GM13976 (cell line): ENCODE measurements at regions of chr18 and their contacts with region 1.

Region 1: GRCh38 chr18:13216092-13216582 is 2.4 kb upstream of the LDLRAD4 start:
- DNase-seq: peak; percentile 70
- CTCF ChIP-seq: peak; percentile 67

Region 2: DNA sequence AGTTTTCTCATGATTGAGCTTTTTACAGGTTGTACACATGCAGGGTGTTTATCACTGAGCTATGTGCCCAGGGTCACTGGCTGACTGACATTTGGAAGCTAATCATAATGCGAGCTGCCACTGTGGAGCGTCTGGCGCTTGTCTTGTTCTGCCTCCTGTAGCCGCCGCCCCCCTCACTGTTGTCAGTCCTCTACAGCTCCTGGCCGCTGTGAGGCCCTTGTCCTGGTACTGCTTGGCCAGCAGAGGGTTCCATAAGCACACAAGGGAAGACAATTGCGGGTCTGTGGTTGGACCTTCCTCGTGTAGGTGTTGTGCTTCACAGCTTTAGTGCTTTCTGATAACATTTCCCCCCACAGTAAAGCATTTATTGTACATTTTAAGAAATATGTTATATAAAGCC is 103.2 kb before region 1 on chr18:
- in situ Hi-C with region 1: loop called (anchors 25 kb)
- DNase-seq: no peak
- CTCF ChIP-seq: no peak

Region 3: DNA sequence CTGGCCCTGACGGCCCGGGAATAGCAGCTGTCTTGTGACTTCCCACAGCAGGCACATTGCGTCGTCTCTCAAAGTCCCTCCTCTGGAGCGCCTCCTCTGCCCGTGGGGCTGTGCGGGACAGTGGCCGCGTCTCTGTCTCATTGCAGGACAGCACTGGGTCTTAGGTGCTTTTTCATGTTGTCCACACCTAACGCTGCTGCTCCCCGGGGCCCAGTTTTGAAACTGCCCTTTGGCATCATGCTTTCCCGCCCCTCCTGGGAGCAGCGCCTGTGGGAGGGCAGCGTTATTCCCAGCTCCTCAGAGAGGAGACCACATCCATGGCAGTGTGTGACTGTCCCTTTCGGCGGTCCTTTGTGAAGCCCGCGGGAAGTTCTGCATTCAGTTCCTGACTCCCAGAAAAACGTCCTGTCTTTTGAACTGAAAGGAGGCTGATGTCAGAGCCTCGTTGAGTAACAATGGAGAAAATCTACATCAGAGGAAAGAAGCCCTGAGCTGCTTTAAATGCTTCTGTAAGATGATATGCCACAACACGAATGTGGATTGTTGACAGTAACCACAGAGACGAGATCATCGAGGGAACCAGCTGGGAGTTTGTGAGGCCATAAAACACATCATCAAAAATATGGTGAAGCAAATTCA is 284.2 kb after region 1 on chr18:
- in situ Hi-C with region 1: loop called (anchors 25 kb)
- DNase-seq: no peak
- CTCF ChIP-seq: no peak

Region 4: GRCh38 chr18:13629841-13630715 is 413.9 kb after region 1 on chr18:
- in situ Hi-C with region 1: loop called (anchors 25 kb)
- DNase-seq: peak; percentile 86
- CTCF ChIP-seq: peak; percentile 44

Region 5: GRCh38 chr18:13762690-13763439 is 546.7 kb after region 1 on chr18:
- in situ Hi-C with region 1: loop called (anchors 25 kb)
- DNase-seq: no peak
- CTCF ChIP-seq: no peak